CD8-positive, alpha-beta T cell (primary cell): ENCODE measurements at regions of chr7 and their contacts with region 1.

Region 1: GRCh38 chr7:144835652-144836544 is at the start of gene TPK1:
- DNase-seq: peak; percentile 81 to 97 (median 89)
- ATAC-seq: peak; percentile 84
- H3K4me3 ChIP-seq: peak within 1 kb of the TSS; percentile 67 to 87
- H3K4me3 Mint-ChIP-seq: peak within 1 kb of the TSS; percentile 98
- H3K27ac ChIP-seq: peak within 1 kb of the TSS; percentile 84 to 87
- H3K27ac Mint-ChIP-seq: peak within 1 kb of the TSS; percentile 99
- H3K4me1 ChIP-seq: peaks cover 39% of the 10 kb centered on the region
- H3K4me1 Mint-ChIP-seq: peaks cover 36% of the 10 kb centered on the region
- H3K27me3 ChIP-seq: no peaks in the 10 kb centered on the region
- H3K27me3 Mint-ChIP-seq: no peaks in the 10 kb centered on the region
- CTCF ChIP-seq: no peak
- total RNA-seq, gene TPK1: 14.7 to 15.1 TPM

Region 2: DNA sequence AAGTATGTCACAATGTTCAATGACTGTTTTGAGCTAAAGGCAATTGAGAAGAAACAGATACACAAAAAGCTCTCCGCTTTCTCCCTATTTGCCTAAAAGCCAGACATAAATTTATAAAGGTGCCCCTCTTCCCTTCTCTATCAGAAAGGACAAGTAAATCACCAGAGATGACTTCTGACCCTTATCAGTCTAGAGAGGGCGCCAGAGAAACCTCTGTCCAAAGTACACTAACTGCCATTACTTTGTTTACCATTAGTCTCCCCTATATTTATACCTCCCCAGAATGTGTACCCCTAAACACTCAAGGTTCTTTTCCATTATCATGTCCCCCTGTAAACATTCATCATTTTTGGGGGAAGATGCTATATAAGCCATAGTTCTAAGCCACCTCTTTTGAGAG is 49.4 kb before region 1 on chr7:
- CTCF ChIA-PET with region 1: interaction called, 5 read pairs
- POLR2A ChIA-PET with region 1: interaction called, 16 read pairs
- intact Hi-C with region 1: loop called in 1 of 2 experiments (anchors 2 kb)
- DNase-seq: peak in 2 of 9 experiments; percentile 31 to 50
- ATAC-seq: no peak
- H3K4me3 ChIP-seq: no peak overlapping the region
- H3K4me3 Mint-ChIP-seq: no peak overlapping the region
- H3K27ac ChIP-seq: no peak overlapping the region
- H3K27ac Mint-ChIP-seq: no peak overlapping the region
- H3K4me1 ChIP-seq: no peaks in the 10 kb centered on the region
- H3K4me1 Mint-ChIP-seq: peaks cover 7% of the 10 kb centered on the region
- H3K27me3 ChIP-seq: no peaks in the 10 kb centered on the region
- H3K27me3 Mint-ChIP-seq: no peaks in the 10 kb centered on the region
- CTCF ChIP-seq: no peak

Region 3: DNA sequence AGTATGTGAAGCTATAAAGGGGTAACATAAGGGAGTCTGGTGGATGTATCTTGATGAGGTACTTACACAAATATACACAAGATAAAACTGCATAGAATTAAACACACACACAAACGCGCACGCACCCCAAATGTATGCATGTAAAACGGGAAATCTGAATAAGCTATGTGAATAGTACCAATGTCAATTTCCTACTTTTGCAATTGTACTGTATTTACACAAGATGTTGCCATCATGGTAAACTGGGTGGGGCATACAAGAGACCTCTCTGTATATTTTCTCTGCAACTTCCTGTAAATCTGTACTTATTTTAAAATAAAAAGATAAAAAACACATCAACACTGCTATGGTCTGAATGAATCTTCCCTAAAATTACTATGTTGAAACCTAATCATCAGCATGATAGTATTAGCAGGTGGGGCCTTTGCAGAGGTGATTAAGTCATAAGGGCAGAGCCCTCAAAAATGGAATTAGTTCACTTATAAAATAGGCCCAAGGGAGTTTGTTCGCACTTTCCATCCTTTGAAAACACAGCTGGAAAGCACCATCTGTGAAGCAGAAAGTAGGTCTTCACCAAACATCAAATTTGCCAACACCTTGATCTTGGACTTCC is 30.2 kb before region 1 on chr7:
- CTCF ChIA-PET with region 1: interaction called, 3 read pairs
- POLR2A ChIA-PET with region 1: interaction called, 104 read pairs
- intact Hi-C with region 1: loop called in 1 of 2 experiments (anchors 5 kb)
- DNase-seq: no peak
- ATAC-seq: no peak
- H3K4me3 ChIP-seq: no peak overlapping the region
- H3K4me3 Mint-ChIP-seq: no peak overlapping the region
- H3K27ac ChIP-seq: no peak overlapping the region
- H3K27ac Mint-ChIP-seq: no peak overlapping the region
- H3K4me1 ChIP-seq: peaks cover 27% of the 10 kb centered on the region
- H3K4me1 Mint-ChIP-seq: peaks cover 43% of the 10 kb centered on the region
- H3K27me3 ChIP-seq: no peaks in the 10 kb centered on the region
- H3K27me3 Mint-ChIP-seq: no peaks in the 10 kb centered on the region
- CTCF ChIP-seq: no peak

Region 4: GRCh38 chr7:144818511-144818910 is 17.4 kb before region 1 on chr7:
- CTCF ChIA-PET with region 1: interaction called, 33 read pairs
- POLR2A ChIA-PET with region 1: interaction called, 144 read pairs
- intact Hi-C with region 1: loop called (anchors 1 to 2 kb)
- DNase-seq: peak; percentile 30 to 89 (median 58)
- ATAC-seq: peak; percentile 96
- H3K4me3 ChIP-seq: no peak overlapping the region
- H3K4me3 Mint-ChIP-seq: peak overlapping the region; percentile 3
- H3K27ac ChIP-seq: peak overlapping the region; percentile 34 to 69
- H3K27ac Mint-ChIP-seq: peak overlapping the region; percentile 90
- H3K4me1 ChIP-seq: peaks cover 55% of the 10 kb centered on the region
- H3K4me1 Mint-ChIP-seq: peaks cover 82% of the 10 kb centered on the region
- H3K27me3 ChIP-seq: no peaks in the 10 kb centered on the region
- H3K27me3 Mint-ChIP-seq: no peaks in the 10 kb centered on the region
- CTCF ChIP-seq: no peak